Activated CD4-positive, alpha-beta memory T cell treated with anti-CD3 and anti-CD28 coated beads for 36 hours (primary cell): ENCODE measurements at regions of chr6 and their contacts with region 1.

Region 1: GRCh38 chr6:133553652-133554051 is 312.5 kb downstream of the EYA4 start:
- DNase-seq: peak; percentile 22
- H3K4me3 Mint-ChIP-seq: no peak overlapping the region
- H3K27ac Mint-ChIP-seq: no peak overlapping the region
- H3K4me1 Mint-ChIP-seq: no peaks in the 10 kb centered on the region
- H3K27me3 Mint-ChIP-seq: no peaks in the 10 kb centered on the region

Region 2: DNA sequence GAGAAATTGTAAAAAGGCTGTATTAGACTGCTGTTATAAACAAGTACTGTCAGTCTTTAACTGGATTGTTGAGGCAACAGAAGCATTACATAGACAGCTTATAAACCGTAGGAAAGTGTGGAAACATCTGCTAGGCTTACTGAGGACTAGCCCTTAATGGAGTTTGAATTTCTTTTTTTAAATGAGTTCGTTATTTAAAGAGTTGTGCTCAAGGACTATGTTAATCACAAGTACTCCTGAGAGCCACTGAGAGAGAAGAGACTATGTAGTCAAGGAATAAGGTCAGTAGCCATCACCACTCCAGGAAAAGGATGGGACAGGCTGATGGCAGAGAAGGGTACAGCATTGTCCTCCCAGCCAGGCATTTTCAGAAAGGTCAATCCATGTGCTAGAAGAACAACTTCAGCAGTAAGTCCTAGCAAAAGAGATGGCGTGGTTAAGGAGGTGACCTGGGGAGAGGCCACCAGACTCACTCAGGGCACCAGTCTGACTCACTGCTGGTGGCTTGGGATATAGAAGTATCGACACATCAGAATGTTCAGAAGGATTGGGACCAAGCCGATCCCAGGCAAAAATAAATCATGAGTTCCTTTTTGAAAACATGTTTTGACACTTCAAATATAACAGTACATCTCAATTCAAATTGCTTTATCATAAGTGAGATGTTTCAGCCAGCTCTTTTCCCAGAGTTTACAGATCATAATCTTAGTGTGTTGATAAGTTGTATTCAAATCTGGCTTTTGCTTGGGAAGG is 732.8 kb before region 1 on chr6:
- CTCF ChIA-PET with region 1: no interaction called
- POLR2A ChIA-PET with region 1: no interaction called
- intact Hi-C with region 1: loop called (anchors 5 kb)
- DNase-seq: no peak
- H3K4me3 Mint-ChIP-seq: no peak overlapping the region
- H3K27ac Mint-ChIP-seq: peak overlapping the region; percentile 64
- H3K4me1 Mint-ChIP-seq: peaks cover 50% of the 10 kb centered on the region
- H3K27me3 Mint-ChIP-seq: no peaks in the 10 kb centered on the region

Region 3: DNA sequence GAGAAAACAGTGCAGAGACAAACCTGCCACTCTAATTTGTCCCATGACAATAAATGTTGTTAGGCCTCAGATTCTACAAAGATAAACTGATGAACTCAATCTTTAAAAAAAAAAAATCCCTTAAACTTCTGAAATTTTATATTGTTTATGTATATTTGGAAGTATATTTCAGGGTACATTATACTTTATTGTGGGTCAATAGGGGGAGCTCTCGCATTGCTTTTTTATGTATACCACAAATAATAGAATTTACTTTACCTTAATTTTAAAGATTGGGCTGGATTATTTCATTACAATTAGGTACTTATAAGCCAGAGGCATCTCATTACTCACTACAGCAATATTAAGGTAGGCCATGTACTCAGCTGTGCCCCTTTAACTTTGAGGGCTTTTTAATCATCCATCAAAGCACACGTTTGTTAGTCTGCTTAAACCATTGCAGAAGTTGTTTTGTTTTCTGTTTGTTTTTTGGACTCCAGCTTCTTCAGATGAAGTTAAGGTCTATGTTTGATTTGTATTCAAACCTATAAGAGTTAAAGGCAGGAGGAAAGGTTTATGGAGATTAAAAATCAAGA is 368.8 kb before region 1 on chr6:
- CTCF ChIA-PET with region 1: interaction called, 4 read pairs
- POLR2A ChIA-PET with region 1: no interaction called
- intact Hi-C with region 1: loop called (anchors 2 kb)
- DNase-seq: no peak
- H3K4me3 Mint-ChIP-seq: no peak overlapping the region
- H3K27ac Mint-ChIP-seq: no peak overlapping the region
- H3K4me1 Mint-ChIP-seq: no peaks in the 10 kb centered on the region
- H3K27me3 Mint-ChIP-seq: peaks cover 1% of the 10 kb centered on the region